ENCODE measurements at regions of chr22 and their contacts with region 1.

Region 1: DNA sequence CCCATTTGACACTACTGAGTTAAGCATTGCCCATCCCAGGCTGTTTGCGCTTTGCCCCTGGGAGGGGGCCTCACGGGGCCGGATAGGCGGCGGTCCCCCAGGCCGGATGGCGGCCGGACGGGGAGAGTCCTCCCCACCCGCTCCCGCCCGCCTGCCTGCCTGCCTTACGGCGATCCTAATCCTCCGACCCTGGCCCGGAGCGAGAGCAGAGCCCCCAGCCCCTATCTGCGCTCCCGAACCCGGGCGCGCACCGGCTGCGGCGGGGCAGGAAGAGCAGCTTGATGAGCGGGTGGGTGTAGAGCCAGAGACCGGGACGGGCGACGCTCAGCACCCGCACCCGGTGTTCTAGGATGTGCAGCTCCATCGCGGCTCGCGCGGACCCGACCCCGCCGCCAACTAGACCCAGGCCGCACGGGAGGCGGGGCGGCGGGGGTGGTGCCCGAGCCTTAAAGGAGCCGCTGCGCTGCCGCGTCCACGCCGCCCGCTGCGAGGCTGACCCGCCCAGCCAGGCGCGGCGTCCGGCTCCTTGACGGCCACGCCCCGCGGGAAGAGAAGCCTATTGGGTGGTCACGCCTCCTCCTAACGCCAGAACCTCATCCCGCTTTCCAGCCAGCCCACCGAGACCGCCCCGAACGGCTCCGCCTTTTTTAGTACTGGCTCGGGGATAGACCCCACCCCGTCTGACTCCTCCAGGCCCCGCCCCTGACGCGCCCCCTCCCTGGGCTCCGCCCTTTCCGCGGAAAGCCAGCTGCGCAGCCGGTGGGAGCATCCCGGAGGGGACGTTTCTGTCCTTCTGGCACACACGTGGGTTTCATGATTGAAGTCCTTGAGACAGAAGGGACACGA is at the start of gene CASTOR1:
- DNase-seq: peak; percentile 80 to 83 (median 81)
- H3K4me3 ChIP-seq: peak within 1 kb of the TSS; percentile 48 to 85 (median 75)
- H3K27ac ChIP-seq: peak within 1 kb of the TSS in 1 of 2 experiments; percentile 49
- H3K4me1 ChIP-seq: peaks cover 4 to 41% (median 38%) of the 10 kb centered on the region in 4 experiments
- H3K27me3 ChIP-seq: no peaks in the 10 kb centered on the region

Region 2: GRCh38 chr22:30104501-30105156 is 184.7 kb before region 1 on chr22:
- CTCF ChIA-PET with region 1: interaction called, 26 read pairs
- POLR2A ChIA-PET with region 1: no interaction called
- DNase-seq: peak; percentile 36 to 51 (median 37)
- H3K4me3 ChIP-seq: no peak overlapping the region
- H3K27ac ChIP-seq: no peak overlapping the region
- H3K4me1 ChIP-seq: peaks cover 4 to 22% (median 16%) of the 10 kb centered on the region in 4 experiments
- H3K27me3 ChIP-seq: no peaks in the 10 kb centered on the region

Region 3: GRCh38 chr22:30301995-30302809 is 12.8 kb after region 1 on chr22:
- CTCF ChIA-PET with region 1: interaction called, 83 read pairs
- POLR2A ChIA-PET with region 1: interaction called, 3 read pairs
- DNase-seq: peak; percentile 73 to 93 (median 91)
- H3K4me3 ChIP-seq: peak overlapping the region in 4 of 7 experiments; percentile 27 to 47 (median 32)
- H3K27ac ChIP-seq: no peak overlapping the region
- H3K4me1 ChIP-seq: peaks cover 32 to 69% (median 66%) of the 10 kb centered on the region in 4 experiments
- H3K27me3 ChIP-seq: no peaks in the 10 kb centered on the region

Region 4: DNA sequence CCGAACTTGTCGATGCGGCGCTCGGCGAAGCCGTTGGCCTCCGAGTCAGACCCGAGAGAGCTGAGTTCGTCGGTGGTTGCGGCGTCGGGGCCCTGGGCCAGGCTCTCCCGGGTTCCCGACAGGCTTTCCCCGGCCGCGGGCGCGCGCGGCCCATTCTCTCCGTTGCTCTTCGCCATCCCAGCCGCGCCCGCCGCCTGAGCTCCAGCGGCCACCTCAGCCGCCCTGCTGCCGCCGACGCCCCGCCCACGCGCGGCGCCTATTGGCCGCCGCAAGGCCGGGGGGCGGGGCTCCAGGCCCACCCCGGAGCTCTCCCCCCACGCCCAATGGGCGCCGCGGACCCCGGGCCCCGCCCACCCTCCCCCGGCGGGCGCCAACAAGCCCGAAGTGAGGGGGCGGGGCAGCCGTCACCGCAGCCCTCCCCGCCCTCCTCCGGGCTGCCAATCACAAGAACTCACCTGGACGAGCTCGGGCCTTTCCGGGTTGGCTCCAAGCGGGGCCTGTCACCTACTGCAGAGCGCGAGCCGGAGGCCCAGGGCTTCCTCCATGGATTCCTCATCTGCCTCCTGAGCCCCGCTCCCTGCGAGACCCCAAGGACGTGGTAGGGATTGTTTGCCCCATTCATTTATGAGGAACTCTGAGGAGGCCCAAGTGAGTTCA is 37.5 kb after region 1 on chr22 and contains the start of gene TBC1D10A:
- CTCF ChIA-PET with region 1: interaction called, 34 read pairs
- POLR2A ChIA-PET with region 1: interaction called, 4 read pairs
- DNase-seq: peak; percentile 92 to 94 (median 94)
- H3K4me3 ChIP-seq: peak within 1 kb of the TSS; percentile 72 to 89 (median 75)
- H3K27ac ChIP-seq: peak within 1 kb of the TSS in 1 of 2 experiments; percentile 61
- H3K4me1 ChIP-seq: peaks cover 13 to 36% (median 36%) of the 10 kb centered on the region in 4 experiments
- H3K27me3 ChIP-seq: no peaks in the 10 kb centered on the region

Region 5: DNA sequence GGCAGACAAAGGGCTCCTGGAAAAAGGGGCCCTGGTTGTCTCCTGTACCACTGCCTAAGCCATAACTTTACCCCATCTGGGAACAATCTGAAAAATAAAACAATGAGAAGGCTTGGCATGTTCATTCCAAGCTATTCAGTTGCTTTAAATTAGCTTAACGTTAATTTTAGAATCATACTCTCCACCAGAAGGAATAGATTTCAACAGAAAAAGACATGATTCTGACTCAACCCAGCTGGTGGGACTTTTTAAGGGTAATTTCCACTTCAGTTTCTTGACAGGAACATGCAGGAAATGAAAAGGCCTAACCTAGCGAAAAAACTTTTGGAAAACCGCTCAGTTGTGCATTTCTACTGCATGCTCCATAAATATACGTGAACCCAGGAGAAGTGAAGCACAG is 59.5 kb after region 1 on chr22:
- CTCF ChIA-PET with region 1: interaction called, 17 read pairs
- POLR2A ChIA-PET with region 1: no interaction called
- DNase-seq: no peak
- H3K4me3 ChIP-seq: no peak overlapping the region
- H3K27ac ChIP-seq: peak overlapping the region in 1 of 2 experiments; percentile 20
- H3K4me1 ChIP-seq: no peaks in the 10 kb centered on the region
- H3K27me3 ChIP-seq: no peaks in the 10 kb centered on the region

Region 6: GRCh38 chr22:30381264-30381663 is 91.9 kb after region 1 on chr22:
- CTCF ChIA-PET with region 1: interaction called, 25 read pairs
- POLR2A ChIA-PET with region 1: no interaction called
- DNase-seq: no peak
- H3K4me3 ChIP-seq: no peak overlapping the region
- H3K27ac ChIP-seq: no peak overlapping the region
- H3K4me1 ChIP-seq: peaks cover 0 to 3% (median under 1%) of the 10 kb centered on the region in 4 experiments
- H3K27me3 ChIP-seq: no peaks in the 10 kb centered on the region

Measured in common myeloid progenitor, CD34-positive (primary cell).